ENCODE measurements at regions of chr3 and their contacts with region 1.

Region 1: GRCh38 chr3:42600111-42600988 is at the start of gene NKTR:
- DNase-seq: peak; percentile 99 to 100 (median 99)
- ATAC-seq: peak; percentile 93
- H3K4me3 ChIP-seq: peak within 1 kb of the TSS; percentile 95
- H3K4me3 Mint-ChIP-seq: peak within 1 kb of the TSS; percentile 98
- H3K27ac ChIP-seq: peak within 1 kb of the TSS; percentile 63 to 72
- H3K27ac Mint-ChIP-seq: peak within 1 kb of the TSS; percentile 99
- H3K4me1 ChIP-seq: peaks cover 22% of the 10 kb centered on the region
- H3K4me1 Mint-ChIP-seq: peaks cover 40% of the 10 kb centered on the region
- H3K27me3 ChIP-seq: no peaks in the 10 kb centered on the region
- H3K27me3 Mint-ChIP-seq: no peaks in the 10 kb centered on the region
- CTCF ChIP-seq: no peak
- total RNA-seq, gene NKTR: 236 to 249 TPM

Region 2: GRCh38 chr3:41961750-41962679 is 638.3 kb before region 1 on chr3 and contains the start of gene ULK4:
- CTCF ChIA-PET with region 1: no interaction called
- POLR2A ChIA-PET with region 1: no interaction called
- intact Hi-C with region 1: loop called in 1 of 2 experiments (anchors 2 kb)
- DNase-seq: peak; percentile 87 to 99 (median 92)
- ATAC-seq: peak; percentile 83
- H3K4me3 ChIP-seq: peak within 1 kb of the TSS; percentile 100
- H3K4me3 Mint-ChIP-seq: peak within 1 kb of the TSS; percentile 100
- H3K27ac ChIP-seq: peak within 1 kb of the TSS; percentile 86 to 97
- H3K27ac Mint-ChIP-seq: peak within 1 kb of the TSS; percentile 98
- H3K4me1 ChIP-seq: peaks cover 19% of the 10 kb centered on the region
- H3K4me1 Mint-ChIP-seq: peaks cover 26% of the 10 kb centered on the region
- H3K27me3 ChIP-seq: no peaks in the 10 kb centered on the region
- H3K27me3 Mint-ChIP-seq: no peaks in the 10 kb centered on the region
- CTCF ChIP-seq: no peak
- total RNA-seq, gene ULK4: 23.8 to 28.6 TPM

Region 3: GRCh38 chr3:42556089-42556632 is 44.2 kb before region 1 on chr3:
- CTCF ChIA-PET with region 1: interaction called, 3 read pairs
- POLR2A ChIA-PET with region 1: interaction called, 8 read pairs
- intact Hi-C with region 1: loop called in 1 of 2 experiments (anchors 5 kb)
- DNase-seq: peak; percentile 31 to 87 (median 46)
- ATAC-seq: peak; percentile 86
- H3K4me3 ChIP-seq: no peak overlapping the region
- H3K4me3 Mint-ChIP-seq: peak overlapping the region; percentile 54
- H3K27ac ChIP-seq: peak overlapping the region; percentile 58 to 73
- H3K27ac Mint-ChIP-seq: peak overlapping the region; percentile 92
- H3K4me1 ChIP-seq: peaks cover 41% of the 10 kb centered on the region
- H3K4me1 Mint-ChIP-seq: peaks cover 47% of the 10 kb centered on the region
- H3K27me3 ChIP-seq: no peaks in the 10 kb centered on the region
- H3K27me3 Mint-ChIP-seq: no peaks in the 10 kb centered on the region
- CTCF ChIP-seq: no peak

Region 4: DNA sequence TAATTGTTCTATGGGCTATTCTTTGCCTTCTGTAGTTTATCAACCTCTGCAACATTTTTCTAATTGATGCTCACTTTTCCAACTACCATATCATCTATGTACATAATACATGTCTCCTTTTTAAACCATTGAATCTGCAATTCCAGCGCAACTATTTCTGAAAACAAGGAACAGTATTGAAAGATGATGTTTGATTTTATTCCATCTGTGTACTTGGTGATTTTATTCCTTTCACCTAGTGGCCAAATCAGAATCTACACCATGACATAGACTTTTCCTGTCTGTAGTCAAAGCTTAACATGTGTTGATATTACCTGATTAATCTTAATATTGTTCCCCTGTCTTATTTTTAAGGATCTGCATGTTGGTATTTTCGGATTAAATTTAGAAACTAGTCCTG is 13.1 kb after region 1 on chr3:
- CTCF ChIA-PET with region 1: interaction called, 20 read pairs
- POLR2A ChIA-PET with region 1: interaction called, 17 read pairs
- intact Hi-C with region 1: no loop called
- DNase-seq: peak in 3 of 14 experiments; percentile 27 to 51 (median 37)
- ATAC-seq: peak; percentile 48
- H3K4me3 ChIP-seq: no peak overlapping the region
- H3K4me3 Mint-ChIP-seq: peak overlapping the region; percentile 1
- H3K27ac ChIP-seq: no peak overlapping the region
- H3K27ac Mint-ChIP-seq: peak overlapping the region; percentile 37
- H3K4me1 ChIP-seq: peaks cover 17% of the 10 kb centered on the region
- H3K4me1 Mint-ChIP-seq: peaks cover 73% of the 10 kb centered on the region
- H3K27me3 ChIP-seq: no peaks in the 10 kb centered on the region
- H3K27me3 Mint-ChIP-seq: no peaks in the 10 kb centered on the region
- CTCF ChIP-seq: peak; percentile 46

Region 5: DNA sequence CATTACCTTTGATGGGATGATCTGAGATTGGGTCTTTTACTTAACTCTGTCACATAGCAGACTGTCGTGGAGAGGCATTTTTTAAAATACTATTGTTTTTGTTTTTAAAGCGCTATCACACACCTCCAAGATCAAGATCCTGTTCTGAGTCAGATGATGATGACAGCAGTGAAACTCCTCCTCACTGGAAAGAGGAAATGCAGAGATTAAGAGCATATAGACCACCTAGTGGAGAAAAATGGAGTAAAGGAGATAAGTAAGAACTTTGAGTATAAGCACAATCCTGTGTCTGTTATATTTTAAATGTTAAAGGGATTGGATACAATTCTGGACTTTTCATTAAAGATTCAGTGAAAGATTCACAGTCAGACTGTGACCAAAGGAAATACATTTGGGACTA is 34.8 kb after region 1 on chr3:
- CTCF ChIA-PET with region 1: no interaction called
- POLR2A ChIA-PET with region 1: interaction called, 10 read pairs
- intact Hi-C with region 1: loop called in 1 of 2 experiments (anchors 5 kb)
- DNase-seq: peak in 3 of 14 experiments; percentile 36 to 59 (median 49)
- ATAC-seq: peak; percentile 55
- H3K4me3 ChIP-seq: no peak overlapping the region
- H3K4me3 Mint-ChIP-seq: no peak overlapping the region
- H3K27ac ChIP-seq: no peak overlapping the region
- H3K27ac Mint-ChIP-seq: peak overlapping the region; percentile 61
- H3K4me1 ChIP-seq: peaks cover 17% of the 10 kb centered on the region
- H3K4me1 Mint-ChIP-seq: peaks cover 4% of the 10 kb centered on the region
- H3K27me3 ChIP-seq: no peaks in the 10 kb centered on the region
- H3K27me3 Mint-ChIP-seq: no peaks in the 10 kb centered on the region
- CTCF ChIP-seq: no peak

Measured in CD4-positive, alpha-beta T cell (primary cell).